GM13977 (cell line): ENCODE measurements at regions of chr12 and their contacts with region 1.

Region 1: GRCh38 chr12:30806989-30807694 is 52.4 kb upstream of the CAPRIN2 start:
- DNase-seq: no peak
- CTCF ChIP-seq: peak; percentile 71

Region 2: DNA sequence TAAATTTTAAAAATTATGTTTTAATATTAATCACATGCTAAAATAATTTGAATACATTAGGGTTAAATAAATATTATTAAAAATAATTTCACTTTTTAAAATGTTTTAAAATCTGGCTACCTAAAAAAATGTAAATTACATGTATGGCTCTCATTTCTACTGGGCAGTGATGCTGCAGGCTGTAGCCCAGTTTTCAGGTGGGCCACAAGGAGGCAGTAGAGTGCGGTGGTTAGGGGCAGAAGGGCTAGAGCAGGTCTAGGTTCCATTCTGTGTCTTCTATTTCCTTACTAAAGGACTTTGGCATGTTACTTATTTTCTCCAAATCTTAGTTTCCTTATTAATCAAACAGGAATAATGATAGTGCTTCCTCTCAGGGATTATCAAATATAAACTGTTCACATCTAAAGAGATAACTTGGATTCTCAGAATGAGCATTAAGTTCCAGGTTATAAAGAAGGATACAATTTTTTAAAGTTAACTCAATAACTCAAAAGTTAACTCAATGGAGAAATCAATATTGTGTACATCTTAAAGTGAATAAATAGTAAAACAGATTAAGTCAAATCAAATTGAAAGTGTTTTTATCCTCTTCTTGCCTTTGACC is 1254.7 kb before region 1 on chr12:
- in situ Hi-C with region 1: loop called (anchors 25 kb)
- DNase-seq: peak; percentile 44
- CTCF ChIP-seq: peak; percentile 91

Region 3: GRCh38 chr12:31089072-31089471 is 281.9 kb after region 1 on chr12:
- in situ Hi-C with region 1: no loop called
- DNase-seq: no peak
- CTCF ChIP-seq: no peak